Activated CD4-positive, alpha-beta memory T cell treated with anti-CD3 and anti-CD28 coated beads for 36 hours (primary cell): ENCODE measurements at regions of chr4 and their contacts with region 1.

Region 1: GRCh38 chr4:121041307-121042090 is 30.8 kb downstream of the NDNF start:
- DNase-seq: peak; percentile 38
- H3K4me3 Mint-ChIP-seq: no peak overlapping the region
- H3K27ac Mint-ChIP-seq: no peak overlapping the region
- H3K4me1 Mint-ChIP-seq: peaks cover 13% of the 10 kb centered on the region
- H3K27me3 Mint-ChIP-seq: peaks cover 19% of the 10 kb centered on the region

Region 2: GRCh38 chr4:120452001-120452400 is 589.5 kb before region 1 on chr4:
- CTCF ChIA-PET with region 1: no interaction called
- POLR2A ChIA-PET with region 1: no interaction called
- intact Hi-C with region 1: no loop called
- DNase-seq: no peak
- H3K4me3 Mint-ChIP-seq: no peak overlapping the region
- H3K27ac Mint-ChIP-seq: no peak overlapping the region
- H3K4me1 Mint-ChIP-seq: no peaks in the 10 kb centered on the region
- H3K27me3 Mint-ChIP-seq: no peaks in the 10 kb centered on the region

Region 3: DNA sequence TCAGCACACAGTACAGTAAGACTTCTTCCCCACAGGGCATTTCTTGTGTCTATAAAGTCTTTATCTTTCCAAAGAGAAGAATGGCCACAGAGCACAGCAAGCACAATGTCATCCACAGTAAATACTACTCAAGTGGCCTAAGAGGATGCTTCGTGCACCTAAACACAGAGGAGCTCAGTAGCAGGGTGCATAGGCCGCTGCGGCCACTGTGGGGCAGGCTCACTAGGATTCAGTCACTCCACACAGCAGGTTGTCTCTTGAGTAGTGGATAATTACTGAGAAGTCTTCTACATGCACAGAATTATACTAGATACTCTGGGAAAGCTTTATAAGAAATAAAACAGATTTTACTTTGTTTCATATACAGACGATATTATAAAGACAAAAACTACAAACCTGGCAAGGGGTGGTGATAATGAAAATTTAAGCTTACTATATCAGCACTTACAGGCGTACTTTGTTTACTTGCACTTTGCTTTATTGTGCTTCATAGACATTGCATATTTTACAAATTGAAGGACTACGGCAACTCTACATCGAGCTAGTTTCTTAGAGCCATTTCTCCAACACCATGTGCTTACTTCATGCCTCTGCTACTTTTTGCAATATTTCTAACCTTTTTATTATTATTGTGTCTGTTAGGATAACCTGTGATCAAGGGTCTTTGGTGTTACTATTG is 197.5 kb before region 1 on chr4:
- CTCF ChIA-PET with region 1: no interaction called
- POLR2A ChIA-PET with region 1: no interaction called
- intact Hi-C with region 1: loop called (anchors 10 kb)
- DNase-seq: peak; percentile 17
- H3K4me3 Mint-ChIP-seq: no peak overlapping the region
- H3K27ac Mint-ChIP-seq: no peak overlapping the region
- H3K4me1 Mint-ChIP-seq: peaks cover 16% of the 10 kb centered on the region
- H3K27me3 Mint-ChIP-seq: no peaks in the 10 kb centered on the region

Region 4: DNA sequence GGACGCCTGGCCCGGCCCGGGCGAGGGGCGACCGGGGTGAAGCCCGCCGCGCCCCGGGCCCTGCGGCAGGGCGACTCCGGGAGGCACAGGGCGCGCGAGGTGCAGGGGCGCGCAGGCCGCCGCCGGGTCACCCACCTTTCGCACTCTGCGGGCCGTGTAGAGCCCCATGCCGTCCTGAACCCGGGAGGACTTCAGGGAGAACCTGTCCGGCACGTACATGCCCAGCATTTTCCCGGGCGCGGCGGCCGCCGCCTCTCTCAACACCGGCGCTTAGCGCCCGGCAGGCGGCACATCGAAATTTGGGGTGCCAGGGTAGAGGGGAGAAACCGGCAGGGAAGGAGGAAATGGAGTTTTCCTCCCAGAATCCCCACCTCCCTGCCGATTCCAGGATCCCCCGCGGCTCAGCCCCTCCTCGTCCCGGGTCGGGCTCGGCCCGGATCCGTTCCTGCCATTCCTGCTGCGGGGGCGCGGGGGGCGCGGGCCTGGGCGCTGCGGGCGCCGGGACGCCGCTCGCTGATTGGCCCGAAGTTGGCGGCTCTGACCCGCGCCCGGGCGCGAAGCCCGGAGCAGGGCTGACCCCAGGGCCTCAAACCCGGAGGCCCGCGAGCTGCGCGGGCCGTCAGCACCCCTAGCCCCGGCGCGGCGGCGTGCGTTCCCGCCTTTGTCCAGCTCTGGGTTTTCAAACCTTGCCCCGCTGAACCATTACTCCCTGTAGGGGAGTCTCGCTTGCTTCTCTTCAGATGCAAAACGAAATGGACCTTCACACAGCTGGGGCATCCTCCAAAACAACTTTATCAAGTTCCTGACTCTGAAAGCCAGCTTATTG is 118.9 kb before region 1 on chr4 and contains the start of gene PRDM5:
- CTCF ChIA-PET with region 1: no interaction called
- POLR2A ChIA-PET with region 1: no interaction called
- intact Hi-C with region 1: loop called (anchors 10 kb)
- DNase-seq: peak; percentile 31
- H3K4me3 Mint-ChIP-seq: peak within 1 kb of the TSS; percentile 77
- H3K27ac Mint-ChIP-seq: no peak within 1 kb of the TSS
- H3K4me1 Mint-ChIP-seq: peaks cover 8% of the 10 kb centered on the region
- H3K27me3 Mint-ChIP-seq: peaks cover 36% of the 10 kb centered on the region
- total RNA-seq, gene PRDM5: 0.17 TPM

Region 5: DNA sequence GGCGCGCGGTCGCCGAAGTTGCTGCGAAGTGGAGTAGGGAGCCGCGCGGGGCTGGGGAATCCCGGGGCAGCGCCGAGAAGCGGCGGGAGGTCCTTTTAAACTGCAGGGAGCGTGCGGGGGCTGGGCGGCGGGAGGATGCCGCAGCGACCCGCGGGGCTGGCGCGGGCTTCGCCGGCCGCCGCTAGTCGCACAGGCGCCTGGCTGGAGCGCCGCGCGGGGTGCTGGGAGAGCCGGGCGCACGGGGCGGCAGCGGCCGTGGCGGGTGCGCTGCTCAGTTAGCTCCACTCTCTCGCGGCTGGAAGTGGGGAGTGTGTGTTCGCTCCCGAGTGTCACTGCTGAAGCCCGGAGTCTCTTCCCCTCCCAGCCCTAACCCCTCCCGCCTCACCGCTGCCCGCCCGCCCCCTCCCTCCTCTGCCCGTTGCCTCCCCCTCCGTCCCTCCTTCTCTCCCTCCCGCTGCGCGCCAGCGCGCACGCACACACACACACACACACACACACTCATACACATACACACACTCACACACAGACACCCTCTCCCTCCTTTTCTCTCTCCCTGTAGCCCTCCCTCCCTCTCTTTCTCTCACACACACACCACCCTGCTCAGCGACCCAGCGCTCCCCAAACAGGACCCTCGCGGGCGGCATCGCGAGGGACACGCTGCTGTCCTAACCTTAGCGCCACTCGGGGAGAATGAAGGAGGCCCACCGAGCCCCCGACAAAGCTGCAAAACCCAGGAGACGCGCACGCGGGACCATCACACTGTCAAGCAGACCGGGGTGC is 30.9 kb after region 1 on chr4 and contains the start of gene NDNF:
- CTCF ChIA-PET with region 1: no interaction called
- POLR2A ChIA-PET with region 1: no interaction called
- intact Hi-C with region 1: loop called (anchors 2 kb)
- DNase-seq: peak; percentile 63
- H3K4me3 Mint-ChIP-seq: peak within 1 kb of the TSS; percentile 71
- H3K27ac Mint-ChIP-seq: no peak within 1 kb of the TSS
- H3K4me1 Mint-ChIP-seq: peaks cover 18% of the 10 kb centered on the region
- H3K27me3 Mint-ChIP-seq: peaks cover 56% of the 10 kb centered on the region
- total RNA-seq, gene NDNF: not detected

Region 6: DNA sequence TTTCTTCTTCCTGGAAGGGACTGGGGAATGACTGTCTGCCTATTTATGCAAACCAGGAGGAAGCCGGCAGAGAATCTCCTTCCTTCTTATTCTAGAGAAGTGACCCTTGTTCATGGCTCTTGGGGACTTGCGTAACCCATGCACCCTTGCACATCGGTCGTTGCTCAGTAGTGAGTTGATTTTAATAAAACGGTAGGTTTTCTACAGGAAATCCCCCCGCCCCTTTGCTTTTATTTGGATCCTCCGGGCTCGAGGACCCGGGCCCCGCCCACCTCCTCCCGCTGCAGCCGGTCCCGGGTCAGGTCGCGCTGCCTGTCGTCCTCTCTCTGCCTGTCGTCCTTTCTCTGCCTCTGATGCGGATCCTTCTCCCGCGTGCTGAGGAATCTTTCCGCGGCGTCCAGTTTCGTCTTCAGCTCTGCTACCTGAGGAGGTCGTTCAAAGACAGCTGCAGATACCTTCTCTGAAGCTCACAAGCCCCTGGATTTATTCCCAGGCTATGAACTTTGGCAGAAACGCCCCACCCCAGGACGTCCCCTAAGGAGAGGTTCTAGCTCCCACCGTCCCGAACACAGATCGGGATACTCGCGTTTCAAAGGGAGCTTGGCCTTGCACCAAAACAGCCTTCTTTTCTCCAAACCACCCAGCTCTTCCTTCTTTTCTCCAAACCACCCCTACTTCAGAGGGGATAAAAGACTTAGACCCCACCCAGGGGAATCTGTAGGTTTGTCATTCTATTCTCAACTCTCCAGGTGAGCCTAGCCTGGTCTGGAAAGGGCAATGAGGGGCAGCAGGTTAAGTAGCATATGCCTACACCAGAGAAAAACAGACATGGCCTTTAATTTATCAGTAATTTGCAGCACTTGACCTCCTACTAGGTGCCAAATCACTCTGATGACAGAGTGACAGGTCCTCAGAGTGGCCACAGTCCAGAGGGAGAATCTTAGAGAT is 115.6 kb after region 1 on chr4:
- CTCF ChIA-PET with region 1: no interaction called
- POLR2A ChIA-PET with region 1: no interaction called
- intact Hi-C with region 1: loop called (anchors 1 kb)
- DNase-seq: peak; percentile 21
- H3K4me3 Mint-ChIP-seq: peak overlapping the region; percentile 68
- H3K27ac Mint-ChIP-seq: peak overlapping the region; percentile 20
- H3K4me1 Mint-ChIP-seq: peaks cover 42% of the 10 kb centered on the region
- H3K27me3 Mint-ChIP-seq: peaks cover 12% of the 10 kb centered on the region

Region 7: GRCh38 chr4:121227341-121227792 is 185.9 kb after region 1 on chr4:
- CTCF ChIA-PET with region 1: no interaction called
- POLR2A ChIA-PET with region 1: no interaction called
- intact Hi-C with region 1: no loop called
- DNase-seq: no peak
- H3K4me3 Mint-ChIP-seq: peak overlapping the region; percentile 72
- H3K27ac Mint-ChIP-seq: peak overlapping the region; percentile 86
- H3K4me1 Mint-ChIP-seq: peaks cover 59% of the 10 kb centered on the region
- H3K27me3 Mint-ChIP-seq: no peaks in the 10 kb centered on the region

Region 8: GRCh38 chr4:121243485-121243884 is 202.0 kb after region 1 on chr4:
- CTCF ChIA-PET with region 1: no interaction called
- POLR2A ChIA-PET with region 1: no interaction called
- intact Hi-C with region 1: loop called (anchors 1 kb)
- DNase-seq: peak; percentile 49
- H3K4me3 Mint-ChIP-seq: peak overlapping the region; percentile 46
- H3K27ac Mint-ChIP-seq: peak overlapping the region; percentile 76
- H3K4me1 Mint-ChIP-seq: peaks cover 40% of the 10 kb centered on the region
- H3K27me3 Mint-ChIP-seq: peaks cover 3% of the 10 kb centered on the region

Region 9: GRCh38 chr4:121272526-121272925 is 231.0 kb after region 1 on chr4:
- CTCF ChIA-PET with region 1: no interaction called
- POLR2A ChIA-PET with region 1: no interaction called
- intact Hi-C with region 1: loop called (anchors 5 kb)
- DNase-seq: no peak
- H3K4me3 Mint-ChIP-seq: no peak overlapping the region
- H3K27ac Mint-ChIP-seq: peak overlapping the region; percentile 56
- H3K4me1 Mint-ChIP-seq: peaks cover 16% of the 10 kb centered on the region
- H3K27me3 Mint-ChIP-seq: peaks cover 7% of the 10 kb centered on the region